ENCODE measurements at regions of chr16 and their contacts with region 1.

Region 1: GRCh38 chr16:3305109-3306068 is at the starts of genes TIGD7 and ZNF75A:
- DNase-seq: peak; percentile 82 to 90 (median 84)
- H3K4me3 ChIP-seq: peak within 1 kb of the TSS; percentile 80
- H3K27ac ChIP-seq: peak within 1 kb of the TSS; percentile 69 to 91
- H3K4me1 ChIP-seq: peaks cover 5% of the 10 kb centered on the region
- H3K27me3 ChIP-seq: no peaks in the 10 kb centered on the region
- CTCF ChIP-seq: peak in 1 of 3 donors; percentile 22
- EP300 ChIP-seq: no peak
- POLR2A ChIP-seq: peak; percentile 93
- total RNA-seq, gene TIGD7: 5.2 to 16.1 (median 13.7) TPM
- total RNA-seq, gene ZNF75A: 17.5 to 50.1 (median 34.3) TPM

Region 2: GRCh38 chr16:3134564-3135417 is 170.6 kb before region 1 on chr16 and contains the start of gene ZNF213:
- intact Hi-C with region 1: no loop called
- DNase-seq: peak; percentile 92 to 96 (median 94)
- H3K4me3 ChIP-seq: peak within 1 kb of the TSS; percentile 92
- H3K27ac ChIP-seq: peak within 1 kb of the TSS; percentile 78 to 88
- H3K4me1 ChIP-seq: peaks cover 2% of the 10 kb centered on the region
- H3K27me3 ChIP-seq: no peaks in the 10 kb centered on the region
- CTCF ChIP-seq: no peak
- EP300 ChIP-seq: no peak
- POLR2A ChIP-seq: peak; percentile 98
- total RNA-seq, gene ZNF213: 4.7 to 18.9 (median 12.2) TPM

Region 3: GRCh38 chr16:3214904-3215600 is 90.3 kb before region 1 on chr16:
- intact Hi-C with region 1: no loop called
- DNase-seq: no peak
- H3K4me3 ChIP-seq: no peak overlapping the region
- H3K27ac ChIP-seq: no peak overlapping the region
- H3K4me1 ChIP-seq: no peaks in the 10 kb centered on the region
- H3K27me3 ChIP-seq: no peaks in the 10 kb centered on the region
- CTCF ChIP-seq: no peak
- EP300 ChIP-seq: no peak
- POLR2A ChIP-seq: no peak

Region 4: DNA sequence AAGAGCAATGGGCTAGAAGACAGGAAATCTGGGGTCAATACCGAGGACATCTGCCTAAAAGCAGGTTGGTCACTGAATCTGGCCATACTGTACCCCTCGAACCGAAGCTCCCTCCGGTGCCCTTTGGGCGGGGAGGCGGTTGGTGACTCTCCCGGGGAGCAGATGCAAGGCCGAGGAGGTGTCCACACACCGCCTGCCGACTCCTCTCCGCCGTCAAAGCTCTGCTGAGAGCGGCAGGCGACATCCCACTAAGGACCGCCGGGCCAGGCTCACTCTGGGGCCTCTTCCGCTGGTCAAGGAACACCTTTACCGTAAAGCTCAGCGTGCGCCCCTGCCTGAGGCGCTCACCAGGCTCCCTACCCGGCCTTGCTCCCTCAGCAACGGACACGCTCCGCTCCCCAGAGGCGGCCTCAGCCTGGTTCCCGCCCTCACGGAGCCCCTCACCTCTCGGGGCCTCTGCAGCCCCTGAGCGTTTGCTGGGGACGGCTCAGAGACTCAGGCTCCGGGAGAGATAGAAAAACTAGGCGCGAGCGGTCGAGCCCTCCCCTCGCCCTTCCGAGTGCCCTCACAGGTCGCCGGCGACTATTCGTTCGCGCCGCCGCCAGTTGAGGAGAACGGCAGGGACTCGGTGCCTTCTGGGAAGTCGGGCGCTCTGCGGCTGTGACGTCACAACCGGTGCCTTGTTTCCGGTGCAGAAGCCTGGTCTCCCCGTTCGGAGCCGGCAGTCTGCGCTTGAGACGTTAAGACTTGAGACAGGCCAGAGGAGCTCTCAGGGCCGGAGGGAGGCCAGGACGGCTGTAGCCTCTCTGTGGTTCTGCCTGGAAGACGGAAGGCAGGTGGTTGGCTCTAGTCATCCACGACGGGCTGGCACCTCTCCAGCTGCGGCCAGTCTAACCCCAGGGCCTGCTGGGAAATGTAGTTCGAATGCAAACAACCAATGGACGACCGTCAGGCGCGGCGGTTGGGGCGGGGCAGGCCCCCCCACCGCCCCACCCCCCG is 70.5 kb before region 1 on chr16 and contains the start of gene ZNF200:
- intact Hi-C with region 1: loop called in 1 of 4 experiments (anchors 10 kb)
- DNase-seq: peak; percentile 95 to 97 (median 96)
- H3K4me3 ChIP-seq: peak within 1 kb of the TSS; percentile 96
- H3K27ac ChIP-seq: peak within 1 kb of the TSS; percentile 96 to 97
- H3K4me1 ChIP-seq: peaks cover 7% of the 10 kb centered on the region
- H3K27me3 ChIP-seq: no peaks in the 10 kb centered on the region
- CTCF ChIP-seq: no peak
- EP300 ChIP-seq: no peak
- POLR2A ChIP-seq: peak; percentile 49
- total RNA-seq, gene ZNF200: 7.3 to 9.2 (median 7.5) TPM

Region 5: GRCh38 chr16:3774156-3774767 is 468.9 kb after region 1 on chr16:
- intact Hi-C with region 1: no loop called
- DNase-seq: peak; percentile 58 to 70 (median 62)
- H3K4me3 ChIP-seq: no peak overlapping the region
- H3K27ac ChIP-seq: peak overlapping the region in 1 of 2 donors; percentile 21
- H3K4me1 ChIP-seq: peaks cover 4% of the 10 kb centered on the region
- H3K27me3 ChIP-seq: no peaks in the 10 kb centered on the region
- CTCF ChIP-seq: no peak
- EP300 ChIP-seq: no peak
- POLR2A ChIP-seq: no peak